CD14-positive monocyte (primary cell): ENCODE measurements at regions of chr3 and their contacts with region 1.

Region 1: DNA sequence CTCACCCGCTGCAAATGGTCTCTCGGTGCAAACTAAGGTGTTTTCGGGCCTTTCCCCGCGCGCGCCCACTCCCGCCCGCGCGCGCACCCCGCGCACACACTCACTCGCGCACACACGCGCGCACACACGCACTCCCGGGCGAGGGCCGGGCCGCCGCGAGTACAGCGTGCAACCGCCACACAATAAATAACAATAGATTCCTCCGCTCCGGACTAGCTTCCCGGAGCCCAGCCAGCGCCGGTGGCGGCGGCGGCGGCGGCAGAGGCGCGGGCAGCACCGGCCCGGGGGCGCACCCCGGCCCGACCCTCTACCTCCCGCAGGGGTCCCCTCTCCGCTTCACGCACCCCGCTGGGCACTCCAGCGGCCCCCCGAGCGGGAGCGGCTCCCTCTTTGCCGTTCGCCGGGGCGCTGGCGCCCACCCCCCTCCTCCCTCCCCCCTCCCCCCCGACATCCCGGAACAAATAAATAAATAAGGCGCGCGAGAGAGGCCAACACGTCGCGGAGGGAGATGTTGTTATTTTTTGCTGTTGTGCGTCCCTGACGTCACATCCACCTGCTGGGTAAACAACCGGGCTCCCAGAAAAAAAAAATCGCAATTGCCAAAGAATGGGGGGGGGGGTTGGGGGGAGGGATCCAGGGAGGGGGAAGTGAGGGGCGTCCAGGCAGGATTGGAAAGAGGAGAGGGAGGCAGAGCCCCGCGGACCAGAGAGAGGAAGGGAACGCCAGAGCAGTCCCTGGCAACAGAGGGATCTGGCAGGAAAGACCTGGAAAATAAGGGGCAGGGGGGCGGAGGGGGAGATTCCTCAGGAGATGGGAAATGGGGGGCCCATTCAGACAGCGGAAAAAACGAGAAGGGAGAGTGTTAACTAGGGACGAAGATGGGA is at the start of gene FOXP1:
- DNase-seq: peak; percentile 67 to 87 (median 77)
- H3K4me3 ChIP-seq: peak within 1 kb of the TSS; percentile 91 to 99 (median 99)
- H3K4me3 Mint-ChIP-seq: peak within 1 kb of the TSS; percentile 95 to 96
- H3K27ac ChIP-seq: peak within 1 kb of the TSS; percentile 92 to 96
- H3K27ac Mint-ChIP-seq: peak within 1 kb of the TSS; percentile 92 to 99 (median 97)
- H3K4me1 ChIP-seq: peaks cover 26 to 42% of the 10 kb centered on the region in 2 donors
- H3K4me1 Mint-ChIP-seq: peaks cover 35% of the 10 kb centered on the region
- H3K27me3 ChIP-seq: no peaks in the 10 kb centered on the region
- H3K27me3 Mint-ChIP-seq: peaks cover 0 to 2% (median 0%) of the 10 kb centered on the region in 3 donors
- CTCF ChIP-seq: no peak
- polyA plus RNA-seq, gene FOXP1: 25.7 to 42.6 (median 27.8) TPM

Region 2: GRCh38 chr3:71006810-71007785 is 576.7 kb before region 1 on chr3:
- intact Hi-C with region 1: loop called in 1 of 2 experiments (anchors 10 kb)
- DNase-seq: peak in 2 of 3 donors; percentile 11 to 29
- H3K4me3 ChIP-seq: no peak overlapping the region
- H3K4me3 Mint-ChIP-seq: no peak overlapping the region
- H3K27ac ChIP-seq: no peak overlapping the region
- H3K27ac Mint-ChIP-seq: no peak overlapping the region
- H3K4me1 ChIP-seq: no peaks in the 10 kb centered on the region
- H3K4me1 Mint-ChIP-seq: peaks cover 4% of the 10 kb centered on the region
- H3K27me3 ChIP-seq: no peaks in the 10 kb centered on the region
- H3K27me3 Mint-ChIP-seq: no peaks in the 10 kb centered on the region
- CTCF ChIP-seq: peak; percentile 62

Region 3: GRCh38 chr3:71069797-71070196 is 514.0 kb before region 1 on chr3:
- intact Hi-C with region 1: loop called (anchors 5 to 10 kb)
- DNase-seq: peak; percentile 46 to 61 (median 55)
- H3K4me3 ChIP-seq: no peak overlapping the region
- H3K4me3 Mint-ChIP-seq: no peak overlapping the region
- H3K27ac ChIP-seq: no peak overlapping the region
- H3K27ac Mint-ChIP-seq: peak overlapping the region in 1 of 7 donors; percentile 16
- H3K4me1 ChIP-seq: peaks cover 20 to 21% of the 10 kb centered on the region in 2 donors
- H3K4me1 Mint-ChIP-seq: peaks cover 36% of the 10 kb centered on the region
- H3K27me3 ChIP-seq: no peaks in the 10 kb centered on the region
- H3K27me3 Mint-ChIP-seq: peaks cover 0 to 6% (median 4%) of the 10 kb centered on the region in 3 donors
- CTCF ChIP-seq: peak; percentile 65

Region 4: GRCh38 chr3:71389911-71390573 is 193.8 kb before region 1 on chr3:
- intact Hi-C with region 1: loop called (anchors 5 to 10 kb)
- DNase-seq: peak in 2 of 3 donors; percentile 21 to 34
- H3K4me3 ChIP-seq: peak overlapping the region in 2 of 3 experiments; percentile 15 to 53
- H3K4me3 Mint-ChIP-seq: peak overlapping the region; percentile 60 to 75
- H3K27ac ChIP-seq: peak overlapping the region; percentile 50 to 86
- H3K27ac Mint-ChIP-seq: peak overlapping the region; percentile 82 to 90 (median 87)
- H3K4me1 ChIP-seq: peaks cover 57 to 63% of the 10 kb centered on the region in 2 donors
- H3K4me1 Mint-ChIP-seq: peaks cover 64% of the 10 kb centered on the region
- H3K27me3 ChIP-seq: no peaks in the 10 kb centered on the region
- H3K27me3 Mint-ChIP-seq: peaks cover 0 to 2% (median 0%) of the 10 kb centered on the region in 3 donors
- CTCF ChIP-seq: no peak

Region 5: DNA sequence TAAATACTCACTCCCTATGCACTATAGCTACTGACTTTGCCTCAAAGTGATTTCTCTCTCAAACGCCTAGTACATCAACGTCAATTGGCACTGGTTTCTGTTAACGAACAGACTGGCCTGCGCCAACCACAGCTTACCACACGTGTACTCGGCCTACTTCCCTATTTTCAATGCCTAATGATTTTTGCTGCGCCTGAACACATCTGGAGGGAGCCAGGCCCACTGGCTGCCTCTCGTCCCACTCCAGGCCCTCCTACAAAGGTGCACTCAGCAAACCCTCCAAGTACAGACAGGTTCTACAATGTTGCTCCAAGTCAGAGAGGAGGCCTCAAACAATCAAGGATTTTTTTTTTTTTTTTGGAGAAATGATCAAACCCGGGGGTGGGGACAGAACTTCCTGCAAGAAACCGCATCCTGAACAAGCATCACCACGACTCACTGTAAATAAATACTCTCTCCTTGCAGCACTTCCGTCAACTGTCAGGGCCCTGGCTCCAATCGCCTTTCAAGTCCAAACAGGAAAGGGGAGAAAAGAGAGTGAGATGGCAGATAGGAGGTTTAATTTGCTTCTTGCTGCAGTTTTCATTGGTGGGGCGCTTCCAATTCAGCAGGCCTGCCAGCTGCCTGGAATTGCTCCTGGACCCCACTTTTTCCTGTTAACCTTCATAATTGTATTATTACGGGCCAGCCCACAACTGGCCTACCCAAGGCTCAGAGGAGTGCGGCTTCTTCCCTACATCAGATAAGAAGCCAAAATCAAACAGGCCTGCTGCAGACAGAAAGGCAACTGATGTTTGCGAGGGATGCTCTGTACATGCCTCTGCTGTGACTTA is 139.6 kb before region 1 on chr3:
- intact Hi-C with region 1: loop called in 1 of 2 experiments (anchors 5 kb)
- DNase-seq: peak; percentile 83 to 91 (median 87)
- H3K4me3 ChIP-seq: peak overlapping the region in 1 of 3 experiments; percentile 55
- H3K4me3 Mint-ChIP-seq: peak overlapping the region; percentile 65 to 79
- H3K27ac ChIP-seq: peak overlapping the region; percentile 80 to 93
- H3K27ac Mint-ChIP-seq: peak overlapping the region; percentile 98 to 100 (median 99)
- H3K4me1 ChIP-seq: peaks cover 96 to 97% of the 10 kb centered on the region in 2 donors
- H3K4me1 Mint-ChIP-seq: peaks cover 95% of the 10 kb centered on the region
- H3K27me3 ChIP-seq: no peaks in the 10 kb centered on the region
- H3K27me3 Mint-ChIP-seq: peaks cover 0 to 2% (median 0%) of the 10 kb centered on the region in 3 donors
- CTCF ChIP-seq: no peak

Region 6: GRCh38 chr3:71456156-71456555 is 127.7 kb before region 1 on chr3:
- intact Hi-C with region 1: no loop called
- DNase-seq: peak in 2 of 3 donors; percentile 36 to 55
- H3K4me3 ChIP-seq: peak overlapping the region; percentile 0 to 58 (median 32)
- H3K4me3 Mint-ChIP-seq: peak overlapping the region; percentile 69 to 91
- H3K27ac ChIP-seq: peak overlapping the region in 1 of 2 donors; percentile 80
- H3K27ac Mint-ChIP-seq: peak overlapping the region; percentile 74 to 97 (median 91)
- H3K4me1 ChIP-seq: peaks cover 35 to 36% of the 10 kb centered on the region in 2 donors
- H3K4me1 Mint-ChIP-seq: peaks cover 65% of the 10 kb centered on the region
- H3K27me3 ChIP-seq: no peaks in the 10 kb centered on the region
- H3K27me3 Mint-ChIP-seq: peaks cover 0 to 3% (median 0%) of the 10 kb centered on the region in 3 donors
- CTCF ChIP-seq: peak; percentile 34

Region 7: GRCh38 chr3:71548705-71549384 is 35.0 kb before region 1 on chr3:
- intact Hi-C with region 1: loop called (anchors 5 kb)
- DNase-seq: peak in 1 of 3 donors; percentile 31
- H3K4me3 ChIP-seq: peak overlapping the region in 1 of 3 experiments; percentile 70
- H3K4me3 Mint-ChIP-seq: no peak overlapping the region
- H3K27ac ChIP-seq: peak overlapping the region; percentile 86 to 87
- H3K27ac Mint-ChIP-seq: peak overlapping the region; percentile 90 to 98 (median 95)
- H3K4me1 ChIP-seq: peaks cover 71 to 84% of the 10 kb centered on the region in 2 donors
- H3K4me1 Mint-ChIP-seq: peaks cover 70% of the 10 kb centered on the region
- H3K27me3 ChIP-seq: no peaks in the 10 kb centered on the region
- H3K27me3 Mint-ChIP-seq: no peaks in the 10 kb centered on the region
- CTCF ChIP-seq: no peak